ENCODE measurements at regions of chr2 and their contacts with region 1.

Region 1: GRCh38 chr2:119066272-119066804 is 92.2 kb downstream of the C1QL2 start:
- DNase-seq: no peak

Region 2: GRCh38 chr2:118643294-118643693 is 423.0 kb before region 1 on chr2:
- intact Hi-C with region 1: no loop called
- DNase-seq: no peak

Region 3: GRCh38 chr2:119011162-119011909 is 55.0 kb before region 1 on chr2:
- intact Hi-C with region 1: loop called in 1 of 2 experiments (anchors 1 kb)
- DNase-seq: no peak

Region 4: GRCh38 chr2:119028327-119029174 is 37.8 kb before region 1 on chr2:
- intact Hi-C with region 1: no loop called
- DNase-seq: no peak

Region 5: DNA sequence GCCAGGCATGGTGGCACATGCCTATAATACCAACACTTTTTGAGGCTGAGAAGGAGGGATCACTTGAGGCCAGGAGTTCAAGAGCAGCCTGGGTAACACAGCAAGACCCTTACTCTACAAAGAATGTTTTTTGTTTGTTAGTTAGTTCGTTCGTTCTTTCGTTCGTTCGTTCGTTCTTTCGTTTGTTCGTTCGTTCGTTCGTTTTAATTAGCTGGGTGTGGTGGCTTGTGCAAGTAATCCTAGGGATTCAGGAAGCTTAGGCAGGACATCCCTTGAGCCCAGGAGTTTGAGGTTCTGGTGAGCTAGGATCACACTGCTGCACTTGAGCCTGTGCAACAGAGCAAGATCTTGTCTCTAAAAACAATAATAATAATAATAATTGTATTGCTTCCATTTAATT is 25.6 kb before region 1 on chr2:
- intact Hi-C with region 1: loop called in 1 of 2 experiments (anchors 2 kb)
- DNase-seq: no peak

Region 6: GRCh38 chr2:119179991-119180390 is 113.7 kb after region 1 on chr2:
- intact Hi-C with region 1: no loop called
- DNase-seq: peak; percentile 66